ENCODE measurements at regions of chr1 and their contacts with region 1.

Region 1: GRCh38 chr1:231016234-231016633 is 23.8 kb downstream of the FAM89A start:
- DNase-seq: no peak
- ATAC-seq: no peak
- H3K4me3 ChIP-seq: no peak overlapping the region
- H3K4me3 Mint-ChIP-seq: no peak overlapping the region
- H3K27ac ChIP-seq: no peak overlapping the region
- H3K27ac Mint-ChIP-seq: no peak overlapping the region
- H3K4me1 ChIP-seq: peaks cover 4% of the 10 kb centered on the region
- H3K4me1 Mint-ChIP-seq: peaks cover 13% of the 10 kb centered on the region
- H3K27me3 ChIP-seq: no peaks in the 10 kb centered on the region
- H3K27me3 Mint-ChIP-seq: no peaks in the 10 kb centered on the region
- CTCF ChIP-seq: no peak

Region 2: DNA sequence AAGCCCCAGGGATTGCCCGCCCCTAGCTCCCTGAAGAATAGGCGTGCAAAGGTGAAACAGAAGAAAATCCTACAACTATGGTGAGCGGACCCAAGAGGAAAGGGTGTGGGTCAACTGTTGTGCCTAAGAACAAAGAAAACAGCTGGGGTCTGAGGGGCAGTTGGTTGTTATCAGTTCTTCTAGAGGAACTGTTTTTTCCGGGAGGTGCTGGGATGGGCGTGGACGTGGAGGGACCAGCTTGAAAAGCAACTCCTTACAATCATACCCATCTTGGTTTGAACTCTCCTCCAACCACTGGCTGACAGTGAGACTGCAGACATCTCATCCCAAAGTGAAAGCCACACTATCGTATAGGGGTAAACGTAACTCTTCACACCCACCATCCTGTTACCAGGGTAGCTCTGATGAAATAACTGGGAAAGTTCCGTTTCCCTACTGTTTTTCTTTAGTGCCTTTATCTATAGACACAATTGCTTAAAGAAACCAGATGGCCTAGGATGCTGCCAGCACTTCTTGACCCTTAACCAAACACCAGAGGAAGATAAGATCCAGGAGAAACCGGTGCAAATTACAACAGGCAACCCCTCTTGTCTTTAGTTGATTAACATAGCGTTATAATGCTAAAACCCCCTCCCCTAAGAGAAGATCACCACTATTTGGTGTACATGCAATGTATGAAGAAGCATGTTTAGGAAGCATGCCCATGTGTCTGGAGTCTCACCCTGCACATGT is 49.4 kb after region 1 on chr1:
- CTCF ChIA-PET with region 1: no interaction called
- POLR2A ChIA-PET with region 1: no interaction called
- intact Hi-C with region 1: loop called in 1 of 2 experiments (anchors 5 kb)
- DNase-seq: no peak
- ATAC-seq: no peak
- H3K4me3 ChIP-seq: no peak overlapping the region
- H3K4me3 Mint-ChIP-seq: no peak overlapping the region
- H3K27ac ChIP-seq: no peak overlapping the region
- H3K27ac Mint-ChIP-seq: no peak overlapping the region
- H3K4me1 ChIP-seq: no peaks in the 10 kb centered on the region
- H3K4me1 Mint-ChIP-seq: no peaks in the 10 kb centered on the region
- H3K27me3 ChIP-seq: no peaks in the 10 kb centered on the region
- H3K27me3 Mint-ChIP-seq: peaks cover 6% of the 10 kb centered on the region
- CTCF ChIP-seq: no peak